Transverse colon (tissue), 4 donors: ENCODE measurements at regions of chr20 and their contacts with region 1.

Region 1: DNA sequence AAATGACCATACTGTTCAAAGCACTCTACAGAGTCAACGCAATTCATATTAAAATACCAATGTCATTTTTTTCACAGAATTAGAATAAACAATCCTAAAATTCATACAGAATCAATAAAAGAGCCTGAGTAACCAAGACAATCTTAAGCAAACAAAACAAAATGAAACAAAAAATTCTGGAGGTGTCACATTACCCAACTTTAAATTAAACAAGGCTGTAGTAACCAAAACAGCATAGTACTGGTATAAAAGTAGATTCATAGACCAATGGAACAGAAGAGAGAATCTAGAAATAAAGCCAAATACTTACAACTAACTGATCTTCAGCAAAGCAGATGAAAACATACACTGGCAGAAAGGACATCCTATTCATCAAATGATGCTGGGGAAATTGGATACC is 346.9 kb upstream of the JAG1 start:
- DNase-seq: no peak
- H3K4me3 ChIP-seq: no peak overlapping the region
- H3K27ac ChIP-seq: no peak overlapping the region
- H3K4me1 ChIP-seq: no peaks in the 10 kb centered on the region
- H3K27me3 ChIP-seq: no peaks in the 10 kb centered on the region
- CTCF ChIP-seq: no peak
- EP300 ChIP-seq: no peak
- POLR2A ChIP-seq: no peak

Region 2: GRCh38 chr20:11255860-11256259 is 235.1 kb after region 1 on chr20:
- in situ Hi-C with region 1: no loop called
- intact Hi-C with region 1: no loop called
- DNase-seq: no peak
- H3K4me3 ChIP-seq: no peak overlapping the region
- H3K27ac ChIP-seq: no peak overlapping the region
- H3K4me1 ChIP-seq: no peaks in the 10 kb centered on the region
- H3K27me3 ChIP-seq: no peaks in the 10 kb centered on the region
- CTCF ChIP-seq: no peak
- EP300 ChIP-seq: no peak
- POLR2A ChIP-seq: no peak

Region 3: DNA sequence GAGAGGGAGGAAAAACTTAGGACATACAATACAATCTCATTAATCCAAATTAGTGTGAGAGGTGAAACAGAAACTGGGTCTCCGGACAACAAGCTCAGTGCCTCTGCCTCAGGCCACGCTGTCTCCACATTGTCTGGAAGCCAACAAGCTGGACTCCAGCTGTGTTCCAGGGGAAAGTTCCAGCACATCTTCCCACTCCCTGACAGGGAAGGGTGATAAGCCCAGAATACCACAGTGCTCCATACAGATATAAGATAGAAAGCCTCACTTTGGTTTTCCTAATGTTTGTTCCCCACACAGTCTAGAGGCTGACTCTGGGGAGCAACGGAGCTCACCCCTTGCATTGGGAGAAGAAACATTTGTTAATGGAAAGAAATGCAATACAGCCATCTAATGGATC is 1870.9 kb after region 1 on chr20:
- in situ Hi-C with region 1: no loop called
- intact Hi-C with region 1: loop called (anchors 5 kb)
- DNase-seq: no peak
- H3K4me3 ChIP-seq: no peak overlapping the region
- H3K27ac ChIP-seq: no peak overlapping the region
- H3K4me1 ChIP-seq: no peaks in the 10 kb centered on the region
- H3K27me3 ChIP-seq: no peaks in the 10 kb centered on the region
- CTCF ChIP-seq: no peak
- EP300 ChIP-seq: no peak
- POLR2A ChIP-seq: no peak